ENCODE measurements at regions of chr7 and their contacts with region 1.

Region 1: DNA sequence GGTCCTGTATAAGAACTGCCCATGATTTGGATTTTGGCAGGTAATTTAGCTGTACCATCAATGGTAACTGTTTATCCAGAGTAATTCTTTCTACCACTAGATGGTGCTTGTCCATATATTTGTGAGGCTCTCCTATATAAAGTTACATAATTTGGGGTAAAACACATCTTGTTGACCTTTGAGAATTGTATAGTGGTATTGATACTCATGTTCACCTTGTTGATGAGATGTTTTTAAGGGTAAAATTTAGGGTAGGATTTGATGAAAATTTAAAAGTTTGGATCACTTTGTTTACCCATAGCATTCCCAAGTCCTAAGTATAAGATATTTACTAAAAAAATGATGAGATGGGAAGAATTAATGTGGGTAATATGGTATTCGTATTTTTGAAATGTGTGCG is 31.6 kb downstream of the ST7 start:
- DNase-seq: no peak
- H3K4me3 Mint-ChIP-seq: no peak overlapping the region
- H3K27ac Mint-ChIP-seq: no peak overlapping the region
- H3K4me1 Mint-ChIP-seq: peaks cover 2% of the 10 kb centered on the region
- H3K27me3 Mint-ChIP-seq: peaks cover 1% of the 10 kb centered on the region

Region 2: DNA sequence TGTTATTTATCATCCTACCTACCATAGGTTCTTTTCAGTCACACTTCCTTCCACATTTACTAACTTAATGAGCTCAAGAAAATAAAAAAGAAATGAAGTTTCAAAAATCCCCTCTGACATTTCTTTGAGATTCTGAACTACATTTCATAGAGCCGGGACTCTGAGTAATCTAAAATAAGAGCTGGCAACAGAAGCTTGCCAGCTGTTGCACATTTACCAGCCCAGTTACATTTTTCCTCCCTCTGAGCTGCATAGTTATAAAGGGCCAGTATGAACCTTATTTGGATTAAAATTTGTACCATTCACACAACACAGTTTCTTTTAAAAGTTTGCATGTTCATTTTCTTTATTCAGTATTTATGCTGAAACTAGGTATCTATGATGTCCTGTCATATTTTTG is 604.9 kb before region 1 on chr7:
- intact Hi-C with region 1: no loop called
- DNase-seq: no peak
- H3K4me3 Mint-ChIP-seq: no peak overlapping the region
- H3K27ac Mint-ChIP-seq: no peak overlapping the region
- H3K4me1 Mint-ChIP-seq: no peaks in the 10 kb centered on the region
- H3K27me3 Mint-ChIP-seq: peaks cover 2% of the 10 kb centered on the region

Region 3: GRCh38 chr7:117014673-117015133 is 29.8 kb after region 1 on chr7:
- intact Hi-C with region 1: loop called (anchors 1 kb)
- DNase-seq: no peak
- H3K4me3 Mint-ChIP-seq: no peak overlapping the region
- H3K27ac Mint-ChIP-seq: no peak overlapping the region
- H3K4me1 Mint-ChIP-seq: peaks cover 53% of the 10 kb centered on the region
- H3K27me3 Mint-ChIP-seq: peaks cover 7% of the 10 kb centered on the region

Region 4: GRCh38 chr7:117119192-117119924 is 134.4 kb after region 1 on chr7:
- intact Hi-C with region 1: loop called (anchors 1 kb)
- DNase-seq: peak; percentile 56
- H3K4me3 Mint-ChIP-seq: no peak overlapping the region
- H3K27ac Mint-ChIP-seq: no peak overlapping the region
- H3K4me1 Mint-ChIP-seq: peaks cover 5% of the 10 kb centered on the region
- H3K27me3 Mint-ChIP-seq: peaks cover 16% of the 10 kb centered on the region